CD4-positive, alpha-beta T cell (primary cell): ENCODE measurements at regions of chr6 and their contacts with region 1.

Region 1: GRCh38 chr6:166999145-166999883 is at the start of gene CEP43:
- DNase-seq: peak; percentile 65 to 93 (median 83)
- ATAC-seq: peak; percentile 87
- H3K4me3 ChIP-seq: peak within 1 kb of the TSS; percentile 98
- H3K4me3 Mint-ChIP-seq: peak within 1 kb of the TSS; percentile 96
- H3K27ac ChIP-seq: peak within 1 kb of the TSS; percentile 14 to 61
- H3K27ac Mint-ChIP-seq: peak within 1 kb of the TSS; percentile 87
- H3K4me1 ChIP-seq: peaks cover 15% of the 10 kb centered on the region
- H3K4me1 Mint-ChIP-seq: peaks cover 29% of the 10 kb centered on the region
- H3K27me3 ChIP-seq: no peaks in the 10 kb centered on the region
- H3K27me3 Mint-ChIP-seq: no peaks in the 10 kb centered on the region
- CTCF ChIP-seq: no peak
- total RNA-seq, gene CEP43: 12.5 to 13.5 TPM

Region 2: DNA sequence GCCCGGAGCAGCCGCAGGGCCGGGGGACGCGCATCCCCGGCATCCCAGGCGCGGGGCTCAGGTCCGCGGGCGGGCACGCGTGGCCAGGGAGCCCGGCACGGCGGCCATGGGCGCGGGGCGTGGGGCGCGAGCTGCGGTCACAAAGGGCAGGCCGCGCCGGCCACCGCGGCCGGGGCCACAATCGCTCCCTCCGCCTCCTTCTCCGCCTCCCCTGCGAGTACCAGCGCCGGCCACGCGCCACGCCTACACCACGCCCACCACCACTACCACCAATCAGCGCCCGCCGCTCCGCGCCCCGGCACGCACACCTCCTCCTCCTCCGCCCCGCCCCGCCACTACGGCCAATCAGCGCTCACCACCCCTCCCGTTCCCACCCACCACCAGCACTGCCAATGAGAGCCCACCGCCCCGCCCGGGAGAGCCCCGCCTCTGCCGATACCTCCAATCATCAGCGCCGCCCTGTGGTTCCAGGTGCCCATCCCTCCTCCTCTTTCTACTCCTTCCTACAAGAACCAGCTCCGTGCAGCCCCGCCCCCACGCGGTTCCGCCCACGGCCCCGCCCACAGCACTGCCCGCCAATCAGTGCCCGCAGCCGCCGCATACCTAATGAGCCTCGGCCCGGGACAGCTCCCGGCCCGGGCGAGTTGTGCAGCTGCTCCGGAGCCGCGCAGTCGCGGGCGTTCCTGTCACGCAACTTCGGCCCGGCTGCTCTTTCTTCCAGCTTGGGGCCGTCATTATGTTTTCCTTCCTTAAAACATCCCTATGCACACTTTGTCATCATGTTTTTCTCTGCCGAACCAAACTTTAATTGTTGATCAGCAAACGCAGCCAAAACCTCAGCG is 372.1 kb before region 1 on chr6 and contains the start of gene RPS6KA2:
- CTCF ChIA-PET with region 1: interaction called, 3 read pairs
- POLR2A ChIA-PET with region 1: interaction called, 5 read pairs
- intact Hi-C with region 1: loop called in 1 of 2 experiments (anchors 5 kb)
- DNase-seq: peak; percentile 100
- ATAC-seq: peak; percentile 92
- H3K4me3 ChIP-seq: peak within 1 kb of the TSS; percentile 78
- H3K4me3 Mint-ChIP-seq: peak within 1 kb of the TSS; percentile 91
- H3K27ac ChIP-seq: peak within 1 kb of the TSS in 1 of 2 donors; percentile 64
- H3K27ac Mint-ChIP-seq: peak within 1 kb of the TSS; percentile 92
- H3K4me1 ChIP-seq: peaks cover 24% of the 10 kb centered on the region
- H3K4me1 Mint-ChIP-seq: peaks cover 31% of the 10 kb centered on the region
- H3K27me3 ChIP-seq: peaks cover 4 to 20% of the 10 kb centered on the region in 2 experiments
- H3K27me3 Mint-ChIP-seq: peaks cover 29% of the 10 kb centered on the region
- CTCF ChIP-seq: no peak
- total RNA-seq, gene RPS6KA2: 5.6 to 6.2 TPM

Region 3: DNA sequence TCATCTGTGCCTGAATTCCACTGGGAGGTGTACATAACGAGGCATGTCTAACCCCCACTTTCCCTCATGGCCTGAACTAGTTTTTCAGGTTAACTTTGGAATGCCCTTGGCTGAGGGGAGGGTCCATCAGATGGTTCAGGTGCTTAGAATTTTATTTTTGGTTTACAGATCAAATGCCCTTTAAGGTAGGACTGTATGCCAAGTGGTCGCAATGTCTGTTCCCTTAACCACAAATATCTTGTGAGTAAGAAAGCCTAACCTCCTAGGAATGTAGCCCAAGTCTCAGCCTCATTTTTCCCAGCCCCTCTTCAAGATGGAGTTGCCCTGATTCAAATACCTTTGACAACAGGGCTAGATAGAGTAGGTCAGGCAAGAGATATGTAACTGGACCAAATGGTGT is 121.4 kb before region 1 on chr6:
- CTCF ChIA-PET with region 1: no interaction called
- POLR2A ChIA-PET with region 1: no interaction called
- intact Hi-C with region 1: no loop called
- DNase-seq: no peak
- ATAC-seq: no peak
- H3K4me3 ChIP-seq: no peak overlapping the region
- H3K4me3 Mint-ChIP-seq: no peak overlapping the region
- H3K27ac ChIP-seq: no peak overlapping the region
- H3K27ac Mint-ChIP-seq: no peak overlapping the region
- H3K4me1 ChIP-seq: no peaks in the 10 kb centered on the region
- H3K4me1 Mint-ChIP-seq: no peaks in the 10 kb centered on the region
- H3K27me3 ChIP-seq: no peaks in the 10 kb centered on the region
- H3K27me3 Mint-ChIP-seq: no peaks in the 10 kb centered on the region
- CTCF ChIP-seq: no peak

Region 4: GRCh38 chr6:166936079-166936787 is 63.1 kb before region 1 on chr6:
- CTCF ChIA-PET with region 1: no interaction called
- POLR2A ChIA-PET with region 1: interaction called, 3 read pairs
- intact Hi-C with region 1: loop called in 1 of 2 experiments (anchors 10 kb)
- DNase-seq: peak in 3 of 14 experiments; percentile 17 to 62 (median 31)
- ATAC-seq: peak; percentile 51
- H3K4me3 ChIP-seq: no peak overlapping the region
- H3K4me3 Mint-ChIP-seq: peak overlapping the region; percentile 30
- H3K27ac ChIP-seq: peak overlapping the region in 1 of 2 donors; percentile 7
- H3K27ac Mint-ChIP-seq: peak overlapping the region; percentile 30
- H3K4me1 ChIP-seq: peaks cover 35% of the 10 kb centered on the region
- H3K4me1 Mint-ChIP-seq: peaks cover 49% of the 10 kb centered on the region
- H3K27me3 ChIP-seq: no peaks in the 10 kb centered on the region
- H3K27me3 Mint-ChIP-seq: no peaks in the 10 kb centered on the region
- CTCF ChIP-seq: no peak

Region 5: GRCh38 chr6:166956444-166957086 is 42.7 kb before region 1 on chr6 and contains the start of gene RNASET2:
- CTCF ChIA-PET with region 1: interaction called, 4 read pairs
- POLR2A ChIA-PET with region 1: interaction called, 26 read pairs
- intact Hi-C with region 1: loop called (anchors 2 to 5 kb)
- DNase-seq: peak; percentile 96 to 100 (median 99)
- ATAC-seq: peak; percentile 81
- H3K4me3 ChIP-seq: peak within 1 kb of the TSS; percentile 96
- H3K4me3 Mint-ChIP-seq: peak within 1 kb of the TSS; percentile 95
- H3K27ac ChIP-seq: peak within 1 kb of the TSS; percentile 88 to 94
- H3K27ac Mint-ChIP-seq: peak within 1 kb of the TSS; percentile 93
- H3K4me1 ChIP-seq: peaks cover 81% of the 10 kb centered on the region
- H3K4me1 Mint-ChIP-seq: peaks cover 76% of the 10 kb centered on the region
- H3K27me3 ChIP-seq: no peaks in the 10 kb centered on the region
- H3K27me3 Mint-ChIP-seq: no peaks in the 10 kb centered on the region
- CTCF ChIP-seq: no peak
- total RNA-seq, gene RNASET2: 164 to 165 TPM

Region 6: DNA sequence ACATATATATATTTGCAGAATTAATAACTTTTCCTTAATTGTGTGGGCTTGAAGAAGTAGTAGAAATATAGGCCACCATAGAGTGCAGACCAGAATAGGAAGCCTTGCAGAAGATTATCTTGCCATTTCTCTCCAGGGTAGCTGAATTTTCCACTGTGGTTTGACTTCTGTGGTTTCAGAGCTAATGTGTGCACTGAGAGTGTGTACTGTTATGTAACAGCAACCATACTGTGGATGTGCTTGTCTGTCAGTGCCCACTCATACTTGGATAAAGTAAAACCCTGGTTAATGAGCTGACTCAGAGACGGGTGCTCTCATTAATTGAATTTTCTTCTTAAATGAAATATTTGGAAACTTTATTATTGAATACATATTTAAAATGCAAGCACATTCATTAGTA is 57.1 kb after region 1 on chr6:
- CTCF ChIA-PET with region 1: no interaction called
- POLR2A ChIA-PET with region 1: interaction called, 4 read pairs
- intact Hi-C with region 1: loop called in 1 of 2 experiments (anchors 10 kb)
- DNase-seq: peak in 5 of 14 experiments; percentile 23 to 81 (median 71)
- ATAC-seq: peak; percentile 87
- H3K4me3 ChIP-seq: no peak overlapping the region
- H3K4me3 Mint-ChIP-seq: peak overlapping the region; percentile 68
- H3K27ac ChIP-seq: no peak overlapping the region
- H3K27ac Mint-ChIP-seq: peak overlapping the region; percentile 84
- H3K4me1 ChIP-seq: peaks cover 49% of the 10 kb centered on the region
- H3K4me1 Mint-ChIP-seq: peaks cover 59% of the 10 kb centered on the region
- H3K27me3 ChIP-seq: no peaks in the 10 kb centered on the region
- H3K27me3 Mint-ChIP-seq: no peaks in the 10 kb centered on the region
- CTCF ChIP-seq: no peak

Region 7: DNA sequence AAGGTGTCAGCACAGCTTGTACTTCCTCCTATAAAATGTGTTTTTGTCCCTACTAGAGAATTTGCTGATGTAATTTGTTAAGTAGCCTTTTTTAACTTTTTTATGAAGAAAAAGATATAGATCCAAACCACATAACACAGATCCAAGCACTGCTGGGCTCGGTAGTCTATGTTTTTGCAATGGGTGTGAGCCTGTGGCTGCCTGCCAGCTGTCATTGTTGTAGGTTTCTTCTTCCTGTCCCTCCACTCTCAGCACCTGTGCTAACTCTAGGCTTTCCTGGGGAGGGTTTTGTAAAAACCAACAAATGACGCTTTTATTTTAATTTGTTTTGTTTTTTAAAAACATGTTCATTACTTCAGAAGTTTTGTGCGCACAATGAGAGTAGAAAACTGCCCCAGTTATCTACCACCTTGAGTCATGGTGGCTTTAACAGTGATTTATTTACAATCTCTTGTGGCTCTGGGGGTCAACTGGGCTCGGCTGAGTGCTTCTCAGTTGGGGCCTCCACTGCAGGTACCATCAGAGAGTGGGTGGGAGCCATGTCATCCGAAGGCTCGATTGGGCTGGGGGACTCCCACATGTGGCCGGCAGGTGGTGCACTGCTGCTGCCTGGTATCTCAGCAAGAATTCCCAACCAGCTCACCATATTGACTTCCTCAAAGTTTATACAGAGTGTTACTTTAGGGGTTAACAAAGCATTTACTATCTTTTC is 120.5 kb after region 1 on chr6:
- CTCF ChIA-PET with region 1: no interaction called
- POLR2A ChIA-PET with region 1: interaction called, 4 read pairs
- intact Hi-C with region 1: loop called in 1 of 2 experiments (anchors 5 kb)
- DNase-seq: peak; percentile 40 to 85 (median 60)
- ATAC-seq: peak; percentile 92
- H3K4me3 ChIP-seq: no peak overlapping the region
- H3K4me3 Mint-ChIP-seq: peak overlapping the region; percentile 32
- H3K27ac ChIP-seq: peak overlapping the region; percentile 51 to 73
- H3K27ac Mint-ChIP-seq: peak overlapping the region; percentile 95
- H3K4me1 ChIP-seq: peaks cover 84% of the 10 kb centered on the region
- H3K4me1 Mint-ChIP-seq: peaks cover 66% of the 10 kb centered on the region
- H3K27me3 ChIP-seq: no peaks in the 10 kb centered on the region
- H3K27me3 Mint-ChIP-seq: no peaks in the 10 kb centered on the region
- CTCF ChIP-seq: no peak

Region 8: GRCh38 chr6:167661552-167662044 is 662.3 kb after region 1 on chr6:
- CTCF ChIA-PET with region 1: no interaction called
- POLR2A ChIA-PET with region 1: no interaction called
- intact Hi-C with region 1: no loop called
- DNase-seq: no peak
- ATAC-seq: no peak
- H3K4me3 ChIP-seq: no peak overlapping the region
- H3K4me3 Mint-ChIP-seq: no peak overlapping the region
- H3K27ac ChIP-seq: no peak overlapping the region
- H3K27ac Mint-ChIP-seq: no peak overlapping the region
- H3K4me1 ChIP-seq: no peaks in the 10 kb centered on the region
- H3K4me1 Mint-ChIP-seq: no peaks in the 10 kb centered on the region
- H3K27me3 ChIP-seq: no peaks in the 10 kb centered on the region
- H3K27me3 Mint-ChIP-seq: peaks cover 1% of the 10 kb centered on the region
- CTCF ChIP-seq: no peak